ENCODE measurements at regions of chrX and their contacts with region 1.

Region 1: DNA sequence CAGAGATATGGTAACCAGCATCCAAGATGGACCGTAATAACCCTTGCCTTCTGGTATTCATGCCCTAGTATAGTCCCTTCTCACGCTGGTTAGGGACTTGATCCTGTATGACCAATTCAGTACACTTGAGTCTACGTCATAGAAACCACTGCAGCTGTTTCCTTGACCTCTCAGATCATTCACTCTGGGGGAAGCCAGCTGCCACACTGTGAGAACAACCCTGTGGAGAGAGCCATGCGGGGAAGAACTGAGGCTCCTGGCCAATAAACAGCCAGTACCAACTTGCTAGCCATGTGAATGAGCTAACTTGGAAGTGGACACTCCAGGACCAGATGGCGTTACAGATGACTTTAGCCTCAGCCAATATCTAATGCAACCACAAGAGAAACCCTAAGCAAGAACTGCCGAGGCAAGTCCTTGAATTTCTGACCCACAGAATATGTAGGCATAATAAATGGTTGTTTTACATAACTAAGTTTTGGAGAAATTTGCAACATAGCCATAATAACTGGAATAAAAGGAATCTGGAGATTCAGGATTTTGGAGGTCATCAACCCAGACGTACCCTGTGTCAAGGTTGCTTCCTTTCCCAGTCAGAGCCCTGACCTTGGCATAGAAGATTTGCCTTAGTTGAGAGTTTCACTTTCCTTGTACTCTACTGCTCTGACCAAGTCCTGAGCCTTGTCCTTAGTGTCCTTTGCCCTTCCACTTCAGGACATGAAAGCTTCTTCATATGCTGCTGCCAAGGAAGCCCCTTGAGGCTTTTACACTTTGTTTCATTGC is 87.3 kb upstream of the ZNF81 start:
- DNase-seq: peak in 1 of 2 donors; percentile 5
- ATAC-seq: peak in 2 of 8 donors; percentile 39 to 50
- H3K4me3 ChIP-seq: no peak overlapping the region
- H3K27ac ChIP-seq: no peak overlapping the region
- H3K4me1 ChIP-seq: no peaks in the 10 kb centered on the region
- H3K27me3 ChIP-seq: peaks cover 0 to 44% (median 0%) of the 10 kb centered on the region in 7 donors
- CTCF ChIP-seq: no peak

Region 2: GRCh38 chrX:46898207-46898606 is 851.2 kb before region 1 on chrX:
- intact Hi-C with region 1: loop called in 1 of 10 experiments (anchors 10 kb)
- DNase-seq: no peak
- ATAC-seq: no peak
- H3K4me3 ChIP-seq: no peak overlapping the region
- H3K27ac ChIP-seq: no peak overlapping the region
- H3K4me1 ChIP-seq: peaks cover 0 to 1% (median 0%) of the 10 kb centered on the region in 9 donors
- H3K27me3 ChIP-seq: peaks cover 0 to 66% (median 0%) of the 10 kb centered on the region in 7 donors
- CTCF ChIP-seq: no peak

Region 3: DNA sequence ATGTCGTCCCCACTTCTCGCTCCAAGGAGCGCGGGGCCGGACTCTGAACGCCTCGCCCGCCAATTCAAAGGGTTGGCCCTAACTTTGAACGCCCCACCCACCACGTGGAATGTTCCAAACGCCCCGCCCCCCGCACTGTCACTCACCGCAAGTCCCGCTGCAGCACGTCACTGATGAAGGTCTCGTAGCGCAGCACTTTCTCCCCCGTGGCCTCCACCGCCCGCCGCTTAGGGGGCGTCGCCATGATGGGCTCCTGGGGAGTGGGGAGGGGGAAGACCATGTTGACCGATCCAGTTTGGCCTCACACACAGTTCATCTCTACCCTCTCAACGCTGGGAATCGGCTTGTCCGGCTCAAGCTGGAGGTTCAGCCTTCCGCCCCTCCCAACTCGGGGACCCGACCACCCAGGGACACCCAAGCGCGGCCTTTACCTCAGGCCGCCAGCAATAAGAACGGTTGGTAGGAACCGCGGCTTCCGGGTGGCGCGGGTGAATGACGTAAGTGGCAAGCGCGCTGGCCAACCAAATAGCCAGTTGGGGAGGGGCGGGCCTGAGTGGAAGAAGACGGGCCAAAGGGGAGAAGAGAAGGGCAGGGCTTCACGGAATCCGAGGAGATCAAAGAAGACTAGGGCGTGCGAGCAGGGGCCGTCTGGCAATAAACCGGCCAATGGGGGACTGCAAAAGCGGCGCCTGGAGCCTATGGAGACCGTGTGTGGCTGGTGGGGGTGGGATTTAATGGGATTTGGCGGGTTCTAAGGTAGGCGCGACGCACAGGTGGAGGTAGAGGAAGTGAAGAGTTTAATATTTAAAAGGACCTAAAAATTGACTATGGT is 90.5 kb before region 1 on chrX and contains the start of gene UXT:
- intact Hi-C with region 1: no loop called
- DNase-seq: peak; percentile 89 to 92
- ATAC-seq: peak; percentile 90 to 97 (median 94)
- H3K4me3 ChIP-seq: peak within 1 kb of the TSS; percentile 44 to 80 (median 67)
- H3K27ac ChIP-seq: peak within 1 kb of the TSS; percentile 90 to 97 (median 93)
- H3K4me1 ChIP-seq: peaks cover 0 to 13% (median 0%) of the 10 kb centered on the region in 9 donors
- H3K27me3 ChIP-seq: no peaks in the 10 kb centered on the region
- CTCF ChIP-seq: no peak
- total RNA-seq, gene UXT: 84.1 to 113 (median 92.1) TPM

Region 4: DNA sequence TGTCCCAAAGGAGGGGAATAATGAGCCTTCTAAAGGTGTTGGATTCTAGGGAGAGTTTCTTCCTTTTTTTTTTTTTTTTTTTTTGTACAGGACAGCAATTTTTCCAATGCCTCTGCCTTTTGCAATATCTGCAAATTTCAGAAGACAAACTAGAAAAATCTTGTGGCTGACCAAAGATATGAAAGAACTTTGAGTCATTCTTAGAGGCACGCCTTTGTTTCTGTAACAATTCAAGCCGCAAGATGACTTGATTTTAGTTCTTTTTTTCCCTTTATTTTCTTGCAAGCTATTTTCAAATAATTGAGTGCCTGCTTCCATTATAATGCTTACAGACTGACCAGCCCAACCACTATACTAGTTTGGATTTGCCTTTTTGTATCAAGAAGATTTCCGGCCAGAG is 42.8 kb before region 1 on chrX:
- intact Hi-C with region 1: no loop called
- DNase-seq: no peak
- ATAC-seq: no peak
- H3K4me3 ChIP-seq: no peak overlapping the region
- H3K27ac ChIP-seq: peak overlapping the region in 2 of 10 donors; percentile 21 to 31
- H3K4me1 ChIP-seq: no peaks in the 10 kb centered on the region
- H3K27me3 ChIP-seq: peaks cover 0 to 32% (median 0%) of the 10 kb centered on the region in 7 donors
- CTCF ChIP-seq: no peak